Esophagus squamous epithelium (tissue), 5 donors: ENCODE measurements at regions of chr19 and their contacts with region 1.

Region 1: GRCh38 chr19:14556662-14557188 is 15.1 kb downstream of the NDUFB7 start:
- DNase-seq: no peak
- H3K4me3 ChIP-seq: peak overlapping the region in 2 of 4 donors; percentile 10 to 33
- H3K27ac ChIP-seq: peak overlapping the region; percentile 33 to 91 (median 86)
- H3K4me1 ChIP-seq: peaks cover 47 to 100% (median 53%) of the 10 kb centered on the region in 3 donors
- H3K27me3 ChIP-seq: no peaks in the 10 kb centered on the region
- CTCF ChIP-seq: peak; percentile 81 to 97 (median 92)
- POLR2A ChIP-seq: no peak

Region 2: DNA sequence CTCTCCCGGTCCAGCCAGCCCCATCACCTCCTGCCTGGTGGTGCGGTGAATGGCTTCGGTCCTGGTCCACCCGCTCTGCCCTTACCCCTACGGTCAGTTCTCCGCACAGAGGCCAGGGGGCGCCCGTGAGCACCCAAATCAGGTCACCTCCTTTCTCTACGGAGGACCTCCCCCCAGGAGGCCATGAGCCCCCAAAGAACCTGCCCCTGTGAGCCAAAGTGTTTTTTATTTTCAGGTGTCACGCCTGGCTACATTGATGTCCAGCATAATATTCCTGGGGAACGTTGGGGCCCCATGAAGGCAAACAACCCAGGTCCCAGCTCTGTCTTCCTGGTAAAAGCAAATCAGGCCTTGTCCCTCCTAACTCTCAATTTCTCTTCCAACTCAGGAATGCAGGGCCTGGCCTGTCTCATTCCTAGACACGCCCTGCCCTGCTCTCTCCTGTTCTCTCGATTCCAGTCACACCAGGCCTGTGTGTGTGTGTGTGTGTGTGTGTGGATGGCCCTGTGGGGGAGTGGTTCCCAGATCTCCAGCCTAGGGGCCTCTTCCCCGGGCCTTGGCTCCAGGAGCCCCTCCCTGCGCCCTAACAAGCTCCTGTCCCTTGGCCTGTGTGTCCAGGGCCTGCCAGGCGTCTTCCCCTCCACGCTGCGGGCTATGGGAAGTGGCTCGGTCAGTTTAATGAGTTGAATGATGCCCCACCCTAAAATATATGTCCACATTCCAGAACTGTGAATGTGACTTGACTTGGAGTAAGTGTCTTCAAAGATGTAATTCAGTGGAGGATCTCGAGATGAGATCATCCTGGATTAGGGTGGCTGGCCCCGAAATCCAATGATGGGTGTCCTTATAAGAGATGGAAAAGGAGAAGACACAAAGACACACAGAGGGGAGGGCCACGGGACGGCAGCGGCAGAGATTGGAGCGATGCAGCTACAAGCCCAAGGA is 51.0 kb before region 1 on chr19:
- intact Hi-C with region 1: loop called (anchors 10 kb)
- DNase-seq: no peak
- H3K4me3 ChIP-seq: peak overlapping the region in 1 of 4 donors; percentile 21
- H3K27ac ChIP-seq: peak overlapping the region; percentile 90 to 100 (median 100)
- H3K4me1 ChIP-seq: peaks cover 16 to 71% (median 38%) of the 10 kb centered on the region in 3 donors
- H3K27me3 ChIP-seq: no peaks in the 10 kb centered on the region
- CTCF ChIP-seq: peak; percentile 42 to 91 (median 80)
- POLR2A ChIP-seq: no peak

Region 3: DNA sequence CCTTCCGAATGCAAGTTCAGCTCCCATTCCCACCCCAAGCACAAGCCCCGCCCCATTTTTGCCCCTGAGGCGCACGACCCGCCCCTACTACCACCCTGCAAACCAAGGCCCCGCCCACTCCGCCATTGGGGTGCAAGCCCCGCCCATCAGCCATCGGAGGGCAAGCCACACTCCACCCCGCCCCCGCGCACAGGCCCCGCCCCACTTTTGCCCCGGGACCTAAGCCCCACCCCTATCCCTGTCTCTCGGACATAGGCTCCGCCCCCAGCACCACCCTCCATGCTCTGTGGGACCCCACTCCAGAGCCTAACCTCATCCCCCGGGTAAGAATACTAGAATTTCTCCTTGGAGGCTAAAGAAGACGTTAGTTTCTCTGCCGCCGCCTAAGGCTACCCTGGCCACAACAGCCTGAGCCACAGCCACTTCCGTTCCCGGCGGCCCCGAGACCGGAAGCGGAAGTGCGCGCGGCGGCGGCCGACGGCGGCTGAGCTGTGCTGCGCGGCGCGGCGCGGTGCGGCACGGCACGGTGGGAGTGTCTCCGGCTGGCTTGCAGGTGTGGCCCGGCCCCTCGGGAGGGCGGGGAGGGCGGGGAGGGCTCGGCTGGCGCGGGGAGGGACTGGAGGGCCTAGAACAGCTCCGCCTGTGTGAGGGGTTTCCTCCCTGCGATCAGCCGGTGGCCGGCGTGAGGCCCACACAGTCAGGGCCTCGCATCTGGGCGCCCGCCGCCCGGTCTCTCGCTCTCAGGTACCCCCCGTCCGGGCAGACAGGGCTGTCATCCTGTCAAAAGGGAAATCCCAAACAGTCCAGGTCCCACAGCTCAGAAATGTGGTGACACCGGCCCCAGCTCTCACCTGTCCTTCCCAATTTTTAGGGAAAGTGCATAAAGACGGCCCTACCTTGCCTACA is 133.1 kb after region 1 on chr19 and contains the start of gene ZNF333:
- intact Hi-C with region 1: no loop called
- DNase-seq: peak; percentile 81
- H3K4me3 ChIP-seq: peak within 1 kb of the TSS; percentile 50 to 88 (median 62)
- H3K27ac ChIP-seq: peak within 1 kb of the TSS; percentile 93 to 97 (median 94)
- H3K4me1 ChIP-seq: peaks cover 0 to 29% (median 8%) of the 10 kb centered on the region in 3 donors
- H3K27me3 ChIP-seq: no peaks in the 10 kb centered on the region
- CTCF ChIP-seq: peak in 1 of 6 experiments; percentile 21
- POLR2A ChIP-seq: peak in 2 of 4 donors; percentile 57 to 62
- total RNA-seq, gene ZNF333: 1.1 to 20.2 (median 3.9) TPM